ENCODE measurements at regions of chr7 and their contacts with region 1.

Region 1: GRCh38 chr7:15015545-15016326 is 113.2 kb upstream of the DGKB start:
- DNase-seq: peak; percentile 90
- ATAC-seq: peak; percentile 83
- H3K4me3 ChIP-seq: peak overlapping the region; percentile 63
- H3K27ac ChIP-seq: peak overlapping the region; percentile 92
- H3K4me1 ChIP-seq: peaks cover 21% of the 10 kb centered on the region
- H3K27me3 ChIP-seq: no peaks in the 10 kb centered on the region
- CTCF ChIP-seq: peak; percentile 77

Region 2: GRCh38 chr7:14698239-14698638 is 317.5 kb before region 1 on chr7:
- CTCF ChIA-PET with region 1: no interaction called
- POLR2A ChIA-PET with region 1: interaction called, 12 read pairs
- intact Hi-C with region 1: loop called (anchors 2 kb)
- DNase-seq: peak; percentile 51
- ATAC-seq: peak; percentile 63
- H3K4me3 ChIP-seq: no peak overlapping the region
- H3K27ac ChIP-seq: no peak overlapping the region
- H3K4me1 ChIP-seq: no peaks in the 10 kb centered on the region
- H3K27me3 ChIP-seq: no peaks in the 10 kb centered on the region
- CTCF ChIP-seq: peak; percentile 56; the same call in 1 of the 2 replicates

Region 3: GRCh38 chr7:14767716-14768425 is 247.9 kb before region 1 on chr7:
- CTCF ChIA-PET with region 1: no interaction called
- POLR2A ChIA-PET with region 1: no interaction called
- intact Hi-C with region 1: loop called (anchors 2 kb)
- DNase-seq: peak; percentile 89
- ATAC-seq: peak; percentile 90
- H3K4me3 ChIP-seq: peak overlapping the region; percentile 37
- H3K27ac ChIP-seq: peak overlapping the region; percentile 93
- H3K4me1 ChIP-seq: peaks cover 54% of the 10 kb centered on the region
- H3K27me3 ChIP-seq: no peaks in the 10 kb centered on the region
- CTCF ChIP-seq: no peak

Region 4: GRCh38 chr7:14924398-14924797 is 91.3 kb before region 1 on chr7:
- CTCF ChIA-PET with region 1: interaction called, 18 read pairs
- POLR2A ChIA-PET with region 1: no interaction called
- intact Hi-C with region 1: loop called (anchors 1 kb)
- DNase-seq: peak; percentile 62
- ATAC-seq: peak; percentile 67
- H3K4me3 ChIP-seq: peak overlapping the region; percentile 45; the same call in 1 of the 2 replicates
- H3K27ac ChIP-seq: no peak overlapping the region
- H3K4me1 ChIP-seq: peaks cover 5% of the 10 kb centered on the region; the same call in 1 of the 2 replicates
- H3K27me3 ChIP-seq: no peaks in the 10 kb centered on the region
- CTCF ChIP-seq: peak; percentile 61

Region 5: GRCh38 chr7:15041226-15041625 is 25.5 kb after region 1 on chr7:
- CTCF ChIA-PET with region 1: interaction called, 22 read pairs
- POLR2A ChIA-PET with region 1: no interaction called
- intact Hi-C with region 1: loop called (anchors 2 kb)
- DNase-seq: peak; percentile 31
- ATAC-seq: peak; percentile 68
- H3K4me3 ChIP-seq: no peak overlapping the region
- H3K27ac ChIP-seq: peak overlapping the region; percentile 1; the same call in 1 of the 2 replicates
- H3K4me1 ChIP-seq: peaks cover 14% of the 10 kb centered on the region; the same call in 1 of the 2 replicates
- H3K27me3 ChIP-seq: no peaks in the 10 kb centered on the region
- CTCF ChIP-seq: no peak

Region 6: DNA sequence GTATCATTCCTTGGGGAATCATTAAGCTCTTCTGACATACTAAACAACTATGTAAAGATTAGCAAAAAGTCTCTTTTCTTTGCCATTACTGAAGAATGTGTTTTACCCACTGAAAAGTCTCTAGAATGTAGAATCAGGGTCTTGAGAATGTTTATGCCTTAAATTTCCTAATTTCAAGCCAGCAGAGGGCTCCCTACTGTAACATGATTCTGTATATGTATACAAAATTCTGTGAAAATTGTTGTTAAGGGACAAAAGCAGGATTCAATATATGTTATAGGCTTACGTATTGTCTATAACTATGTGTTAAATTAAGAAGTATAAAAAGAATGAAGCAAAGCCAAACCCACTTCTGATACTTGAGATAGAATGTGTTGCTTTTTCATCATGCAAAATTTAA is 183.7 kb after region 1 on chr7:
- CTCF ChIA-PET with region 1: interaction called, 7 read pairs
- POLR2A ChIA-PET with region 1: no interaction called
- intact Hi-C with region 1: loop called (anchors 2 kb)
- DNase-seq: peak; percentile 44
- ATAC-seq: no peak
- H3K4me3 ChIP-seq: no peak overlapping the region
- H3K27ac ChIP-seq: peak overlapping the region; percentile 71; the same call in 1 of the 2 replicates
- H3K4me1 ChIP-seq: peaks cover 21% of the 10 kb centered on the region
- H3K27me3 ChIP-seq: no peaks in the 10 kb centered on the region
- CTCF ChIP-seq: peak; percentile 66

Region 7: DNA sequence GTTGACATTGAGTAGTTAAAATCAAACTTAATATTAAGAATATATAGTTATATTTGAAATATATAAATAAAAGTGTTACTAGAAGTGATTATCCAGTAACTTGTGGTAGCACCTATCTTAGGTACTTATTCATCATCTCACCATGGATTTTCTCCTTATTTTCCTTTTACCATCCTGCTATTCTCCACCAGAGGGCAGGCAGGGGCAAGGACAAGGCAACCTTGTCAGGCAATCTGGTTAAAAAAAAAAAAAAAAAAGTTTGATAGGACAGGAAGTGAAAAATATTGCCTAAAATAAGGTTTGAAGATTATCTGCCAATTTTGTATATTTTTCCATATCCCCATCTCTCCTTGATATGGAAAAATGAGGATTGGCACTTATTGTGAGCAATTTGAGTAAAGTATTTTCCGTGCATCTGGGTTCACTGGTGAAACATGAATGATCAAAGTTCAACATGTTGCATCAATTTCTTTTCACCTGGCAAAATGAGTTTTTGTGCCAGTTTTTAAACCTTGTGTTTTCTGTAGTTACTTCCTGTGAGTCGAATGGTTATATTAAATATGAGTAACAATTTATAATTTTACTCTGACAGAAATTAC is 289.4 kb after region 1 on chr7:
- CTCF ChIA-PET with region 1: no interaction called
- POLR2A ChIA-PET with region 1: no interaction called
- intact Hi-C with region 1: loop called (anchors 5 kb)
- DNase-seq: peak; percentile 62
- ATAC-seq: no peak
- H3K4me3 ChIP-seq: no peak overlapping the region
- H3K27ac ChIP-seq: no peak overlapping the region
- H3K4me1 ChIP-seq: no peaks in the 10 kb centered on the region
- H3K27me3 ChIP-seq: no peaks in the 10 kb centered on the region
- CTCF ChIP-seq: peak; percentile 66